K562 (cell line): ENCODE measurements at regions of chr12 and their contacts with region 1.

Region 1: GRCh38 chr12:31659087-31659933 is at the start of gene ETFBKMT:
- DNase-seq: peak; percentile 90 to 98 (median 90)
- ATAC-seq: peak; percentile 99
- H3K4me3 ChIP-seq: peak within 1 kb of the TSS; percentile 62
- H3K27ac ChIP-seq: peak within 1 kb of the TSS; percentile 96
- H3K4me1 ChIP-seq: peaks cover 0 to 3% of the 10 kb centered on the region in 2 experiments; a peak in 2 of 5 replicates
- H3K27me3 ChIP-seq: no peaks in the 10 kb centered on the region
- CTCF ChIP-seq: peak; percentile 60 to 66 (median 64); a peak in 5 of 6 replicates
- EP300 ChIP-seq: no peak; the same call in none of the 2 replicates
- POLR2A ChIP-seq: peak; percentile 87
- RAD21 ChIP-seq: peak; percentile 48 to 51
- polyA plus RNA-seq, gene ETFBKMT: 1.0 to 1.7 TPM

Region 2: DNA sequence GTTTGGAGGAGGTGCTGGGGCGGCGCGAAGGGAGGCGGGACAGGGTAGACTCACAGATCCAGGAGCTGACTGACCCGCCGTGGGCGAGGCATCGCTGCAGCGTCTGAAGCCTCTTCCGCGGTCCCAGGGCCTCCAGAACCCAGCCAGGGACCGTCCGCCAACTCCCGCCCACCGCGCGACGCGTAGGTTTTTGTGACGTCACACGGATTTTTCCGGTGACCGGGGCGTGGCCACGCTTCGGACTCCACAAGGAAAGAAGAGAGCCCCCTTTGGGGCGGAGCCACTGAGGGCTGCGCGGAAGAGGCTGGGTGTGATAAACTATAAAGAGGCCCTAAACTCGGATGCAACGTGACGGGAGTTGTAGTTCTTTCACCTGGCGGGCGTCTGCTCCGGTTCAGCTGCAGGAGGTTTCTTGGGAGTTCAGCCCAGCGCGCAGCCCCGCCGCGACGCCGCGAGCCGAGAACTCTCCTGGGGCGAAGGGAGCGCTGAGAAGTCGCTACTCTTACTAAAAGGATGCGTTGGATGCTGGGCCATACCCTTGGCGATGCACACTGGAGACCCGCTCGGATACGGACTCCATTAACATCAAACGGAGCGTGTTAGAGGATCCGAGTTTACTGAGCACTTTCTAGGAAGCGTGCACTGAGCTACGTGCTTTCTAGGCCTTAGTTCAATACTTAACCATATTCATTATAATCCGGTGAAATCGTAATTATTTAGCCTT is 69.8 kb after region 1 on chr12 and contains the start of gene AMN1:
- CTCF ChIA-PET with region 1: no interaction called
- POLR2A ChIA-PET with region 1: no interaction called
- in situ Hi-C with region 1: no loop called
- intact Hi-C with region 1: loop called (anchors 5 kb)
- DNase-seq: peak; percentile 92 to 100 (median 95)
- ATAC-seq: peak; percentile 89
- H3K4me3 ChIP-seq: peak within 1 kb of the TSS; percentile 70
- H3K27ac ChIP-seq: peak within 1 kb of the TSS; percentile 94
- H3K4me1 ChIP-seq: peaks cover 14 to 48% of the 10 kb centered on the region in 2 experiments
- H3K27me3 ChIP-seq: no peaks in the 10 kb centered on the region
- CTCF ChIP-seq: peak in 1 of 3 experiments; percentile 18; a peak in 1 of 6 replicates
- EP300 ChIP-seq: 0 out of 2 replicates have a peak, but pooled peaks have one; percentile 4
- POLR2A ChIP-seq: peak; percentile 87
- RAD21 ChIP-seq: peak; percentile 19 to 22; a peak in 3 of 4 replicates
- polyA plus RNA-seq, gene AMN1: 26.9 to 27.6 TPM

Region 3: GRCh38 chr12:31959161-31959700 is 299.9 kb after region 1 on chr12 and contains the start of gene RESF1:
- CTCF ChIA-PET with region 1: no interaction called
- POLR2A ChIA-PET with region 1: interaction called, 3 read pairs
- in situ Hi-C with region 1: no loop called
- intact Hi-C with region 1: loop called (anchors 10 kb)
- DNase-seq: peak; percentile 85 to 94 (median 88)
- ATAC-seq: peak; percentile 95
- H3K4me3 ChIP-seq: peak within 1 kb of the TSS; percentile 62
- H3K27ac ChIP-seq: peak within 1 kb of the TSS; percentile 90
- H3K4me1 ChIP-seq: peaks cover 17 to 21% of the 10 kb centered on the region in 2 experiments; a peak in 4 of 5 replicates
- H3K27me3 ChIP-seq: no peaks in the 10 kb centered on the region
- CTCF ChIP-seq: no peak; a peak in 1 of 6 replicates
- EP300 ChIP-seq: peak; percentile 35; the same call in 1 of the 2 replicates
- POLR2A ChIP-seq: peak; percentile 74
- RAD21 ChIP-seq: peak; percentile 39 to 51
- polyA plus RNA-seq, gene RESF1: 21.5 to 30.1 TPM

Region 4: DNA sequence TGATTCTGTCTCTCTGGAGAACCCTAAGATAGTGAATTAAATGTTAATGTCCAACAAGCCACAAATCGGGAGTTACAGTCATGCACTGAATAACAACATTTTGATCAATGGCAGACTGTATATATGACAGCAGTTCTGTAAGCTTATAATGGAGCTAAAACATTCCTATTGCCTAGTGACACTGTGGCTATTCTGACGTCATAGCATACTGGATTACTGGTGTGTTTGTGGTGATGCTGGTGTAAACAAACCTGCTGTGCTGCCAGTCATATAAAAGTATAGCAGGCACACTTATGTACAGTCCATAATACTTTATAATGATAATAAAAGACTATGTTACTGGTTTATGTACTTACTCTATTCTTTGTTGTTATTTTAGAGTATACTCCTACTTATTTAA is 390.6 kb after region 1 on chr12:
- CTCF ChIA-PET with region 1: no interaction called
- POLR2A ChIA-PET with region 1: no interaction called
- in situ Hi-C with region 1: no loop called
- intact Hi-C with region 1: loop called (anchors 1 kb)
- DNase-seq: no peak
- ATAC-seq: no peak
- H3K4me3 ChIP-seq: no peak overlapping the region
- H3K27ac ChIP-seq: no peak overlapping the region
- H3K4me1 ChIP-seq: peaks cover 18 to 35% of the 10 kb centered on the region in 2 experiments
- H3K27me3 ChIP-seq: no peaks in the 10 kb centered on the region
- CTCF ChIP-seq: no peak
- EP300 ChIP-seq: no peak
- POLR2A ChIP-seq: no peak
- RAD21 ChIP-seq: no peak

Region 5: DNA sequence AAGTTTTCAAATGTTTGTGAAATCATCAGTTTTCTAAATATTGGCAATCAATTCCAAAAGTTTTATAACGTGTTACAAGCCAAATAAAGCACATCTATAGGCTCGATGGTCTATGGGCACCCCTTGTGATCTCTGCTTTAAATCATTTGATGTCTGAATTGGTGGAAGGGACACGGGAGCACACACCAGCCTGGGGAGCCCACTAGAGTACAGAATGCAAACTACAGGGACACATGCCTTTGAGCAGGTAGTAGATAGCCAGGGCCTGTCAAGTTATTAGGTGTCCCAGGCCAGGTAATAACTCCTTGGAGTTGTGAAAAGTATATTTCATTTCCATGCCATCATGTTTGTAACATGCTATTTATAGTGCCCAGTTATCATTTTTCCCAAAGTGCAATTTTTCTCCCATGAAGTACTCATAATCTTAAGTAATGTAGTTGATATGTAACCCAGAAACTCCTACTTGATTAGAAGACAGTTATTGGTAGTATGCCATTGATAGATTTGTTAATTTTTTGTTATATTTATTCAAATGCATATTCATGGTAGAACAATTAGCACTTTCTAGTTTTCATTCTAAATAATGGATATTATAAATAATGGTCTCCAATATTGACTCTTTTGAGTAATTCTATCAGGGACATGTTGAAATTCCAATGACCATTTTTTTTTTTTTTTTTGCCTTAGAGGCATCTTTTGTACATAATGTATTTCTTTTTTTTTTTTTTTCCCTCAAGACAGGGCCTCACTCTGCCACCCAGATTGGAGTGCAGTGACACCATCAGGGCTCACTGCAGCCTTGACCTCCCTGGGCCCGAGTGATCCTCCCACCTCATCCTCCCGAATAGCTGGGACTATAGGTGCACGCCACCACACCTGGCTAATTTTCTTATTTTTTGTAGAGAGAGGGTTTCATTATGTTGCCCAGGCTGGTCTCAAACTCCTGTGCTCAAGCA is 643.2 kb after region 1 on chr12:
- CTCF ChIA-PET with region 1: interaction called, 8 read pairs
- POLR2A ChIA-PET with region 1: no interaction called
- in situ Hi-C with region 1: loop called (anchors 5 kb)
- intact Hi-C with region 1: no loop called
- DNase-seq: peak; percentile 19 to 54 (median 38)
- ATAC-seq: peak; percentile 94
- H3K4me3 ChIP-seq: no peak overlapping the region
- H3K27ac ChIP-seq: no peak overlapping the region
- H3K4me1 ChIP-seq: peaks cover 0 to 2% of the 10 kb centered on the region in 2 experiments; a peak in 1 of 5 replicates
- H3K27me3 ChIP-seq: no peaks in the 10 kb centered on the region
- CTCF ChIP-seq: peak; percentile 67 to 73 (median 70)
- EP300 ChIP-seq: no peak
- POLR2A ChIP-seq: no peak
- RAD21 ChIP-seq: peak; percentile 22 to 81; a peak in 3 of 4 replicates

Region 6: DNA sequence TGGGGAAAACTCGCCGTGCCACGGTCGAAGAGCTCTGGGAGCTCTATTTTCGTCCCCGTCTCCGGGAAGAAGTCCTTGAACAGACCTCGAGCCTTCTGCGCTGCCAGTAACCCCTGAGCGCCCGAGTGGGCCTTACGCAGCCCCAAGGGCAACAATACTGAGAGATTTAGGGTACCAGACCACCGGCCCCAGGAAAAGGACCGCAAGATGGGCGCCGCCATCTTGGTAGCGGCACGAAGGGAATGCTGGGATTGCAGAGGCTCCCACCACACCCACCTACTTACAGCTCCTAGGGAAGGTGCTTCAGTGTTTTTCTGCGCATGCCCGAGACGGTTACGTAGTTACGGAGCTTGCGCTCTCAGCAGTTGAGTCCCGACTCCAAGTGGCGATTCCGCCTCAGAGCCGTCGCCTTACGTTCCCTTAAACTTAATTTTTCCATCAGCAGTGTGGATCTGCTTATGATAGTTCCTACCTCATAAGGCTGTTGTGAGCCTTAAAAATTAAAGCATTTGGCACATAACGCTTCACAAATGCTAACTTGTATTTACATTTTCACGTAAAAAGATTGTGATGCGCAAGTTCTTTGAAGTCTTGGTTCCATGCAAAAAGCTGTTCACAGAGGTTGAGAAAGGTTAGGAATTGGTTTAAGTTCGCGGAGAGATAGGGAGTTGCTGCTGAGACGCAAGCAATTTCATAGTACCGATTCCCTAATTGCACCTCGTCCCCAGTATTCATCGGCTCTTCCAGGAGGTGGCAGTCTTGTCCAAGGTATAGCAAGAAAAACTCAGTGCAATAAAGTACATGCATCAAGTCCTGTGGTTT is 1096.6 kb after region 1 on chr12 and contains the start of gene YARS2:
- CTCF ChIA-PET with region 1: no interaction called
- POLR2A ChIA-PET with region 1: no interaction called
- in situ Hi-C with region 1: no loop called
- intact Hi-C with region 1: loop called (anchors 10 kb)
- DNase-seq: peak; percentile 83 to 98 (median 88)
- ATAC-seq: peak; percentile 95
- H3K4me3 ChIP-seq: peak within 1 kb of the TSS; percentile 73
- H3K27ac ChIP-seq: peak within 1 kb of the TSS; percentile 69
- H3K4me1 ChIP-seq: peaks cover 4 to 5% of the 10 kb centered on the region in 2 experiments; a peak in 1 of 5 replicates
- H3K27me3 ChIP-seq: no peaks in the 10 kb centered on the region
- CTCF ChIP-seq: peak; percentile 74 to 90 (median 89)
- EP300 ChIP-seq: no peak
- POLR2A ChIP-seq: peak; percentile 97
- RAD21 ChIP-seq: peak; percentile 95 to 97
- polyA plus RNA-seq, gene YARS2: 15.2 to 18.4 TPM